CD4-positive, alpha-beta memory T cell (primary cell): ENCODE measurements at regions of chr1 and their contacts with region 1.

Region 1: GRCh38 chr1:241611063-241611462 is 29.1 kb downstream of the CHML start:
- DNase-seq: peak in 4 of 5 donors; percentile 56 to 62 (median 60)
- H3K4me3 ChIP-seq: no peak overlapping the region
- H3K4me3 Mint-ChIP-seq: no peak overlapping the region
- H3K27ac ChIP-seq: no peak overlapping the region
- H3K27ac Mint-ChIP-seq: no peak overlapping the region
- H3K4me1 ChIP-seq: no peaks in the 10 kb centered on the region
- H3K4me1 Mint-ChIP-seq: no peaks in the 10 kb centered on the region
- H3K27me3 ChIP-seq: no peaks in the 10 kb centered on the region
- H3K27me3 Mint-ChIP-seq: no peaks in the 10 kb centered on the region

Region 2: GRCh38 chr1:241551759-241552638 is 59.1 kb before region 1 on chr1:
- CTCF ChIA-PET with region 1: interaction called, 9 read pairs
- POLR2A ChIA-PET with region 1: interaction called, 4 read pairs
- intact Hi-C with region 1: loop called (anchors 5 kb)
- DNase-seq: peak; percentile 47 to 59 (median 49)
- H3K4me3 ChIP-seq: peak overlapping the region in 1 of 2 donors; percentile 46
- H3K4me3 Mint-ChIP-seq: peak overlapping the region; percentile 82 to 94 (median 90)
- H3K27ac ChIP-seq: peak overlapping the region; percentile 17
- H3K27ac Mint-ChIP-seq: peak overlapping the region; percentile 74 to 98 (median 96)
- H3K4me1 ChIP-seq: peaks cover 15% of the 10 kb centered on the region
- H3K4me1 Mint-ChIP-seq: peaks cover 13 to 22% (median 18%) of the 10 kb centered on the region in 4 donors
- H3K27me3 ChIP-seq: no peaks in the 10 kb centered on the region
- H3K27me3 Mint-ChIP-seq: peaks cover 0 to 3% of the 10 kb centered on the region in 2 donors

Region 3: GRCh38 chr1:241627453-241628259 is 16.6 kb after region 1 on chr1:
- CTCF ChIA-PET with region 1: interaction called, 71 read pairs
- POLR2A ChIA-PET with region 1: interaction called, 3 read pairs
- intact Hi-C with region 1: loop called (anchors 1 kb)
- DNase-seq: peak; percentile 43 to 63 (median 55)
- H3K4me3 ChIP-seq: no peak overlapping the region
- H3K4me3 Mint-ChIP-seq: peak overlapping the region; percentile 30 to 82 (median 72)
- H3K27ac ChIP-seq: peak overlapping the region; percentile 7
- H3K27ac Mint-ChIP-seq: peak overlapping the region; percentile 60 to 88 (median 82)
- H3K4me1 ChIP-seq: peaks cover 7% of the 10 kb centered on the region
- H3K4me1 Mint-ChIP-seq: peaks cover 8 to 12% (median 9%) of the 10 kb centered on the region in 4 donors
- H3K27me3 ChIP-seq: no peaks in the 10 kb centered on the region
- H3K27me3 Mint-ChIP-seq: no peaks in the 10 kb centered on the region

Region 4: DNA sequence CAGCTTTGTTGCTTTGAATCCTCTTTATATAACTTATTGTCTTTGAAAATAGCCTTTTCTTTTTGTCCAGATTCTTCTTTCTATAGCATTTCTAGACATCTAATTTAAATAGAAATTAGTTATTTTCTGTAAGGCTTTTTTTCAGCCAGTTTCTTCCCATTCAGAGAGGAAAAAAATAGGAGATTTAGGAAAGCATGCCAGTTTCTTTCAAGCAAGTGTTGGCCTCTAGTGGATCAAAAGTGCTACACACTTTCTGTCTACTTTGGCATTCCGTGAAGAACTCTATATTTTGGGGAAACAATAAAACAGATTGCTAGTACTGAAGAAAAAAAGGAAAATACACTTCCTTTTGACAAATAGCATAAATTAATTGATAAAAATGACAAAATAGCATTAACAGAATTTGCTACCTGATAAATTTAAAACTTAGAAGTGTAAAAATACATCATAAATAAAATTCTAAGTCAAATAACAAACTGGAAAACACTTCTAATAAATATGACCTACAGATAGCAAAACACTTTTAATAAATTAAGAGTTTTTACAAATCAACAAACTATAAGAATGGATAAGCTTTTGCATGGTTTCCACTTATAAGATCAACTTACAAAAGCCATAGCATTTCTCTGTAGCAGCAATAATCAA is 223.8 kb after region 1 on chr1:
- CTCF ChIA-PET with region 1: interaction called, 3 read pairs
- POLR2A ChIA-PET with region 1: no interaction called
- intact Hi-C with region 1: loop called (anchors 1 kb)
- DNase-seq: no peak
- H3K4me3 ChIP-seq: no peak overlapping the region
- H3K4me3 Mint-ChIP-seq: no peak overlapping the region
- H3K27ac ChIP-seq: no peak overlapping the region
- H3K27ac Mint-ChIP-seq: no peak overlapping the region
- H3K4me1 ChIP-seq: no peaks in the 10 kb centered on the region
- H3K4me1 Mint-ChIP-seq: peaks cover 0 to 4% (median 0%) of the 10 kb centered on the region in 4 donors
- H3K27me3 ChIP-seq: no peaks in the 10 kb centered on the region
- H3K27me3 Mint-ChIP-seq: peaks cover 4 to 5% of the 10 kb centered on the region in 2 donors

Region 5: GRCh38 chr1:241895013-241895412 is 283.9 kb after region 1 on chr1:
- CTCF ChIA-PET with region 1: interaction called, 6 read pairs
- POLR2A ChIA-PET with region 1: no interaction called
- intact Hi-C with region 1: loop called (anchors 5 kb)
- DNase-seq: no peak
- H3K4me3 ChIP-seq: no peak overlapping the region
- H3K4me3 Mint-ChIP-seq: no peak overlapping the region
- H3K27ac ChIP-seq: no peak overlapping the region
- H3K27ac Mint-ChIP-seq: no peak overlapping the region
- H3K4me1 ChIP-seq: no peaks in the 10 kb centered on the region
- H3K4me1 Mint-ChIP-seq: no peaks in the 10 kb centered on the region
- H3K27me3 ChIP-seq: no peaks in the 10 kb centered on the region
- H3K27me3 Mint-ChIP-seq: no peaks in the 10 kb centered on the region

Region 6: GRCh38 chr1:242017584-242018233 is 406.6 kb after region 1 on chr1:
- CTCF ChIA-PET with region 1: interaction called, 5 read pairs
- POLR2A ChIA-PET with region 1: no interaction called
- intact Hi-C with region 1: loop called (anchors 1 kb)
- DNase-seq: peak in 4 of 5 donors; percentile 10 to 27 (median 18)
- H3K4me3 ChIP-seq: no peak overlapping the region
- H3K4me3 Mint-ChIP-seq: no peak overlapping the region
- H3K27ac ChIP-seq: no peak overlapping the region
- H3K27ac Mint-ChIP-seq: no peak overlapping the region
- H3K4me1 ChIP-seq: no peaks in the 10 kb centered on the region
- H3K4me1 Mint-ChIP-seq: no peaks in the 10 kb centered on the region
- H3K27me3 ChIP-seq: no peaks in the 10 kb centered on the region
- H3K27me3 Mint-ChIP-seq: no peaks in the 10 kb centered on the region